ENCODE measurements at regions of chr13 and their contacts with region 1.

Region 1: GRCh38 chr13:43905435-43906031 is 25.8 kb downstream of the LACC1 start:
- DNase-seq: peak in 1 of 5 donors; percentile 44
- H3K4me3 ChIP-seq: no peak overlapping the region
- H3K27ac ChIP-seq: no peak overlapping the region
- H3K4me1 ChIP-seq: no peaks in the 10 kb centered on the region
- H3K27me3 ChIP-seq: no peaks in the 10 kb centered on the region
- CTCF ChIP-seq: peak in 2 of 3 donors; percentile 74 to 85
- EP300 ChIP-seq: no peak
- POLR2A ChIP-seq: no peak

Region 2: DNA sequence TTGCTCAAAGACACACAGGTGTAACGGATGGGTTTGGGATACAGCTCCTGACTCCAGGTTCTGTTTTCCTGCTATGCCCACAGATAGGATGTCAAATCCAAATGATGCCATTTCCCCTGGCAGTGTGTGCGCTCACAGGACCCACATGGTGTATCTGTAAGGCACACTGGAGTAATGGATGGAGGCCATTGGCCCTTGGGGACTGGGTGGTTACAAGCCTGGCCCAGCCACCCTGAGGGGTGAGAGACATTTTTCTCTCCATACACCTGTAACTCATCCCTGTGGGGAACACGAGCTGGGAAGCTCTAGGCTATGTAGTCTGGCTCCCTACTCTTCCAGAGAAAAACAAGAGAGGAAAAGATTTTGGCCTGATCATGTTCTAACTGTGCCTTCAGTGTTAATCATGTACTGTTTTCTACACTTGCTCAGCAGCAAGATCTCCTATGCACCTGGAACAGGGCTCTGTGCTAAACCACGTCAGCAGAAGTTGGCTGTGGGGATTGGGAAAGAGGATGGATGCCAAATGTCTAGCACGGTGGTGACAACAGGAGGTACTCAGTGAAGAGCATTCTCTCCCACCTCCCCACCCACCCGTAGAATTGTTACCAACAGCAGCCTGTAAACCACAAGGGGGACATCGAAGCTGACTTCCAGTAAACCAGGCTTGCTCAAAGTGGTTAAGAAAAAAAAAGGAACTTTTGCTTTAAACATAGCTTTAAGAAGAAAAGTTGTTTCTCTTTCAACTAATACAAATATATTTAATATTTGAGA is 211.2 kb after region 1 on chr13:
- intact Hi-C with region 1: no loop called
- DNase-seq: no peak
- H3K4me3 ChIP-seq: no peak overlapping the region
- H3K27ac ChIP-seq: no peak overlapping the region
- H3K4me1 ChIP-seq: no peaks in the 10 kb centered on the region
- H3K27me3 ChIP-seq: no peaks in the 10 kb centered on the region
- CTCF ChIP-seq: no peak
- EP300 ChIP-seq: no peak
- POLR2A ChIP-seq: no peak

Region 3: GRCh38 chr13:44465318-44465717 is 559.8 kb after region 1 on chr13:
- intact Hi-C with region 1: loop called in 2 of 4 experiments (anchors 10 kb)
- DNase-seq: no peak
- H3K4me3 ChIP-seq: no peak overlapping the region
- H3K27ac ChIP-seq: no peak overlapping the region
- H3K4me1 ChIP-seq: peaks cover 1% of the 10 kb centered on the region
- H3K27me3 ChIP-seq: no peaks in the 10 kb centered on the region
- CTCF ChIP-seq: no peak
- EP300 ChIP-seq: no peak
- POLR2A ChIP-seq: no peak

Measured in ovary (tissue), 10 donors.